ENCODE measurements at regions of chr17 and their contacts with region 1.

Region 1: GRCh38 chr17:8109661-8110464 is 8.5 kb downstream of the ALOXE3 start:
- DNase-seq: peak; percentile 85
- H3K4me3 Mint-ChIP-seq: peak overlapping the region; percentile 45
- H3K27ac Mint-ChIP-seq: no peak overlapping the region
- H3K4me1 Mint-ChIP-seq: peaks cover 8% of the 10 kb centered on the region
- H3K27me3 Mint-ChIP-seq: peaks cover 20% of the 10 kb centered on the region

Region 2: GRCh38 chr17:8073627-8074484 is 36.0 kb before region 1 on chr17:
- CTCF ChIA-PET with region 1: interaction called, 43 read pairs
- POLR2A ChIA-PET with region 1: no interaction called
- intact Hi-C with region 1: no loop called
- DNase-seq: peak; percentile 91
- H3K4me3 Mint-ChIP-seq: peak overlapping the region; percentile 70
- H3K27ac Mint-ChIP-seq: no peak overlapping the region
- H3K4me1 Mint-ChIP-seq: peaks cover 18% of the 10 kb centered on the region
- H3K27me3 Mint-ChIP-seq: peaks cover 40% of the 10 kb centered on the region

Region 3: GRCh38 chr17:8079291-8080207 is 30.3 kb before region 1 on chr17:
- CTCF ChIA-PET with region 1: interaction called, 43 read pairs
- POLR2A ChIA-PET with region 1: no interaction called
- intact Hi-C with region 1: no loop called
- DNase-seq: peak; percentile 89
- H3K4me3 Mint-ChIP-seq: peak overlapping the region; percentile 93
- H3K27ac Mint-ChIP-seq: peak overlapping the region; percentile 81
- H3K4me1 Mint-ChIP-seq: peaks cover 13% of the 10 kb centered on the region
- H3K27me3 Mint-ChIP-seq: peaks cover 10% of the 10 kb centered on the region

Region 4: DNA sequence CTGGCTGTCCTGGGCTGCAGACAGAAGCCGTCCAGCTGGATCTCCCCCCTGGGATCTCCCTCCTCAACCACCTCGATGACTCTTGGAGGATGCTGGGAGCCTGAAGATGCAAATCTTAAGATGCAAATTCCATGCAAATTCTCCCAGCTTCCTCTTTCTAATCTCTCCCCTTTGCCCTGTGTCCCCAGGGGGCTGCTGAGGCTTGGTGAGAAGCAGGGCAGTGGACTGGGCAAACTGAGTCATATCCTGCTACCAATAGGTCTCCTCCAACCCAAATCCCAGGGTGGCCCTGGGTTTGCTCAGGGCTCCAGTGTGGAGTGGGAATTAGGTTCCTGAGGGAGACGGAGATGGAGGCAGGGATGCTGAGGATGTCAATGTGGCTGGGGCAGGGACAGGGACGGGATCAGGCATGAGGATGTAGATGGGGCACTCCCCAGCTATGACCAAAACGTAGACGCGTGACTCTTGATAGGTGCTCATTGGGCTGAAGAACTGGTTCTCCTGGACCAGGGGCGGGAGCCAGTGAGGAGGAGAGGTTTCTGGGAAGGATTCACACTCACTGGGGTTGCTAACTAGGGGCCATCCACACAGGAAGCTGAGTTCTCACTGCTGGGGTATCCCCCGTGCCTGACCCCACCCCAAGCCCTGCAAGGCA is 18.7 kb before region 1 on chr17:
- CTCF ChIA-PET with region 1: interaction called, 172 read pairs
- POLR2A ChIA-PET with region 1: no interaction called
- intact Hi-C with region 1: loop called (anchors 1 kb)
- DNase-seq: no peak
- H3K4me3 Mint-ChIP-seq: no peak overlapping the region
- H3K27ac Mint-ChIP-seq: no peak overlapping the region
- H3K4me1 Mint-ChIP-seq: peaks cover 10% of the 10 kb centered on the region
- H3K27me3 Mint-ChIP-seq: peaks cover 24% of the 10 kb centered on the region